AG04450 (cell line): ENCODE measurements at regions of chr15 and their contacts with region 1.

Region 1: DNA sequence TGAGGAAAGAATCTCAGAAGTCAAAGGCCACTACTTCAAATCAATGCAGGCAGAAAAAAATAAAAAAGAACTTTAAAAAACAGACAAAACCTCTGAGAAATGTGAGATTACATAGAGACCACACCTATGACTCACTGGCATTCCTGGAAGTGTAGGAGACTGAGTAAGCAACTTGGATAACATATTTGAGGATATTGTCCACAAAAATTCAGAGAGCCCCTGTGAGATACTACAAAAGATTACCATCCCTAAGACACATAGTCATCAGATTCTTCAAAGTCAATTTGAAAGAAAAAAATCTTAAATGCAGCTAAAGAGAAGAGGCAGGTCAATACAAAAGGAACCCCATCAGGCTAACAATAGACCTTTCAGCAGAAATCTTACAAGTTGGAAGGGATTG is 887.3 kb downstream of the NTRK3 start:
- DNase-seq: peak; percentile 82
- H3K4me3 ChIP-seq: no peak overlapping the region
- H3K27ac ChIP-seq: no peak overlapping the region
- H3K27me3 ChIP-seq: no peaks in the 10 kb centered on the region
- CTCF ChIP-seq: no peak

Region 2: DNA sequence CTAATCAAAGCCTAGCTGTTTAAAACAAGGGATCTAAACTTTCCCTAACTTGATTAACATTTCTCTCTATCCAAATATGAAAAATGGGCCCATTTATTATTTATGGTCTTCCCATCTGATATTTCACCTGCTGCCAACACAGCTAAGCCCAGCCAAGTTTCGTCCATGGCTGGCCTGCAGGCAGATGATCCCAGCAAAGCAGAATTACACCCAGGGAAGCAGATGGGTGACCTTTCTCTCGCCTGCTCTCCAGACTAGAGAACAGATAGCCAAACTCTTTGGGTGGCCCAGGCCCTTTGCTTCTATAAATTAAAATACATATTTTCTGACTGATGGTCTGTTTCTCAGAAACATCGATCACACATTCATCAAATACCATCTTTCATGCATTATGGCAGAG is 250.8 kb before region 1 on chr15:
- CTCF ChIA-PET with region 1: no interaction called
- POLR2A ChIA-PET with region 1: no interaction called
- DNase-seq: no peak
- H3K4me3 ChIP-seq: no peak overlapping the region
- H3K27ac ChIP-seq: no peak overlapping the region
- H3K27me3 ChIP-seq: no peaks in the 10 kb centered on the region
- CTCF ChIP-seq: no peak

Region 3: GRCh38 chr15:87348746-87349145 is 20.5 kb before region 1 on chr15:
- CTCF ChIA-PET with region 1: interaction called, 8 read pairs
- POLR2A ChIA-PET with region 1: interaction called, 11 read pairs
- DNase-seq: no peak
- H3K4me3 ChIP-seq: no peak overlapping the region
- H3K27ac ChIP-seq: peak overlapping the region; percentile 33
- H3K27me3 ChIP-seq: no peaks in the 10 kb centered on the region
- CTCF ChIP-seq: no peak